Mammary epithelial cell (primary cell): ENCODE measurements at regions of chr4 and their contacts with region 1.

Region 1: DNA sequence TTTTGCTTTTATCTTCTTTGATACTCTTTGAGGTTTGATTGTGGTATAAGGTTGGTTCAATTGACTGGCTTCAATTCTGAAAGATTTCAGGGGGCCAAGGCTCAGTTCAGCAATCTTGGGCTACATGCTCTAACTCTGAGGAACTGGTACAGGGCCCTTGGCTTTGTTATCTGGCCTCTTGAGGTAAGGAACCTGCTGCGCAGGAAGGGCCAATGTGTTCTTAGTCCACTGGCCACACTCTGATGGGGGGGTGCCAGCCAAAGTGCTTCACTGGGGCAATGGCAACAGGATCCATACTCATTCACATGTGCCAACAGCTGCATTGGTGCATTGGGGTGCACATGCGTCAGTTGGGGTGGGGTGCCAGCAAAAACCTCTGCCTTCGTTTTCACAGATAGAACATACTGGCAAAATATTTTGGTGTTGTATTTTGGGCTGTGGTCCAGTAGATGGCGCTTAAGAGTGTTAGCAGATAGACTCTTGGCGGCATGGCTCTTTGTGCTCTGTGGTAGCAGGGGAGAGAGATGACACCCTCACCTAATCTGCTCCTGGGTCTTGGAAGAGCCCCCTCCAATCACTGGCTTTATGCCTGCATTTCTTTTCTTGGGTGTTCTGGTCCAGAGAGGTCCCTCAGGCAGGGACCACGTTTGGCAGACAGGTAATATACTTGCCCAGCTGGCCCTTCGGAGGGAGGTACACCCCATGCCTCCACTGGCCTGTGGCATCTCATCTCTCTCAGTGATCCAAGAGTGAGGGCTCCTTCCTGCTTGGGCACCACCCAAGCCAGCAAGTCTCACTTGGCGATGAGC is 42.9 kb downstream of the NDST3 start:
- DNase-seq: peak; percentile 13
- H3K4me3 ChIP-seq: no peak overlapping the region
- H3K27ac ChIP-seq: no peak overlapping the region
- H3K4me1 ChIP-seq: no peaks in the 10 kb centered on the region
- H3K27me3 ChIP-seq: no peaks in the 10 kb centered on the region
- CTCF ChIP-seq: peak; percentile 61 to 78

Region 2: GRCh38 chr4:118224239-118224829 is 147.2 kb after region 1 on chr4:
- CTCF ChIA-PET with region 1: no interaction called
- dilution Hi-C with region 1: no loop called
- in situ Hi-C with region 1: loop called in 1 of 2 experiments (anchors 5 kb)
- intact Hi-C with region 1: loop called (anchors 1 kb)
- DNase-seq: peak; percentile 40
- H3K4me3 ChIP-seq: no peak overlapping the region
- H3K27ac ChIP-seq: no peak overlapping the region
- H3K4me1 ChIP-seq: no peaks in the 10 kb centered on the region
- H3K27me3 ChIP-seq: no peaks in the 10 kb centered on the region
- CTCF ChIP-seq: peak; percentile 52 to 60